Prostate gland (tissue), 2 donors: ENCODE measurements at regions of chr17 and their contacts with region 1.

Region 1: GRCh38 chr17:63714547-63715277 is 14.8 kb upstream of the LIMD2 start:
- DNase-seq: no peak
- H3K4me3 ChIP-seq: no peak overlapping the region
- H3K27ac ChIP-seq: no peak overlapping the region
- H3K4me1 ChIP-seq: no peaks in the 10 kb centered on the region
- H3K27me3 ChIP-seq: no peaks in the 10 kb centered on the region
- CTCF ChIP-seq: no peak
- POLR2A ChIP-seq: no peak

Region 2: DNA sequence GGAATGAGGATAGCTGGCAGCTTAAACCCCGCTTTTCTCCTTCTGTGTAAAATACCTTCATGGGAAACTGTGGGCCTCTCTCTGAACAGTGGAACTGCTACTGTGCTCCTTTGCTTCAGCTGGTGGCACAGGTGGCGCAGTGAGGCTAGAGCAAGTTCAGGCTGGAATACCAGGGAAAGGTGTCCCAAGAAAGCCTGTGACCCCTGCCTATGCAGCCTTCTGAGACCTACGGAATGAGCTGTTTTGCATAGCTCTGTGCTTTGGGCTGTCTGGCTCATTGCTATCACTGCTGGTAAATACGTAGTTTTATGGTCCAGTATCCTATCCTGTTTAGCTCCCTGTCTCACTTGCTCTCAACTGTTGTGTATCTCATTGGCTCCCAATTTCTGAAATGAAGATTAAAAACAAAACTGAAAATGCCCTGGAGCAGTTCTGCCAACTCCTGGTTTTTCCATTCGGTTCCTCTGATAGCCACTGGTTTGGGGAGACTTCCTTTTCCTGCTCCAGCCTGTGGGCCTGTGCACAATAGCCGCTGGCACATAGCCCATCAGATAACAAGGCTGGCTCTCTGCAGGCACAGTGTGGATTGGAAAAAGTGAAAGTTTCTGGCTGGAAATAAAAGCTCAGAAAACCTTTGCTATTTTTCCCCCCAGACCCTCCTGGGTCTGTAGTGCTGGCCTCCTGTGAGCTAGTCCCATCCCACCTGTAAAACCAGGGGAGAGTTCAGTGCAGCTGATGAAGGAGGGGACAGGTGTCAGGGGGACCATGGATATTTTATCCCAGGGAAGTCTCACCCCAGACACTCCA is 38.9 kb before region 1 on chr17:
- intact Hi-C with region 1: loop called (anchors 5 kb)
- DNase-seq: peak; percentile 94
- H3K4me3 ChIP-seq: no peak overlapping the region
- H3K27ac ChIP-seq: peak overlapping the region; percentile 74 to 82
- H3K4me1 ChIP-seq: peaks cover 24% of the 10 kb centered on the region
- H3K27me3 ChIP-seq: no peaks in the 10 kb centered on the region
- CTCF ChIP-seq: peak in 1 of 4 experiments; percentile 22
- POLR2A ChIP-seq: no peak